ENCODE measurements at regions of chr2 and their contacts with region 1.

Region 1: DNA sequence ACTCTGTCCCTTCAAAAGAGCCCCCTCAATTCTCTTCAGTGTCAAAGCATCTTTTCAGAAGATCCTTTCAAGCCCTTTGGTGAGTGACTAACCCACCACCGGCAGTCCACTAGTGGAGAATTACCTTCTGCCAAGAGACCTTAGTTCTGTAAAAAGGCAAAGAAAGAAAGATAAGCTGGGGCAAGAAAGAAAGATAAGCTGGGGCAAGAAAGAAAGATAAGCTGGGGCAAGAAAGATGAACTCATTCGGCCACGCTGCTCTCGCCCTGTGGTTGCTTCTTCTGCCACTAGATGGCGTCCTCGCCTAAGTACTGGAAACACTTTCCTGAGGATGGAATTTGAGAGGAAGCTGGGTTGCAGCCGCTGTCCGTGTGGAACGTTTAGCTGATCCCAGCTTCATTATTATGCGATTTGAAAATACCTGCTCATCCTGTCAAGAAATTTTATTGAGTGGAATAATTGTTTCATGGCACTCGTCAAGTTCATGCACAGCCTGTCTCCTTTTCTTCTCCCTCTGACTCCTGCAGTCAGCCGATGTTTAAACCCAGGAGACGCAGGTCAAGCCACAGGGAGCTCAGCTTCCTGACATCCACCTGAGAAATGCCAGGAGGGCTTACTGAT is 17.3 kb upstream of the ANXA4 start:
- DNase-seq: peak; percentile 71
- CTCF ChIP-seq: peak; percentile 94

Region 2: DNA sequence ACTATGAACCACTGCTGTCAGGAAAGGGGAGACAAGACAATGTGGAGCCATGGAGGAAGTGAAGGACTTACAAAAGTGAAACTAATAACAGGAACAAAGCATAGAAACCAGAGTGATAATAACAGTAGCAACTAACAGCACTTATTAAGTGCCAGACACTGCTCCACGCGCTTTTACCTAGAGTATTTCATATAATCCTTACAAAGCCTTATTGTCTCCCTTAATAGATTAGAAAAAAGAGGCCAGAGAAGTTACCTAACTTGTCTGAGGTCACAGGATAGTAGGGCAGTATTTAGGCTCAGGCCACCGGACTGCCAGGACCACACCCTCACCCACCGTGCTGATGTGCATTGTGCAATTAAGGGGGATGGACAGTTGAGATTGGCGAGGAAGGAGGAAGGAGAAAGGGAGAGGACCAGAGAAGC is 188.8 kb before region 1 on chr2:
- CTCF ChIA-PET with region 1: no interaction called
- POLR2A ChIA-PET with region 1: no interaction called
- DNase-seq: peak; percentile 23
- CTCF ChIP-seq: no peak

Region 3: DNA sequence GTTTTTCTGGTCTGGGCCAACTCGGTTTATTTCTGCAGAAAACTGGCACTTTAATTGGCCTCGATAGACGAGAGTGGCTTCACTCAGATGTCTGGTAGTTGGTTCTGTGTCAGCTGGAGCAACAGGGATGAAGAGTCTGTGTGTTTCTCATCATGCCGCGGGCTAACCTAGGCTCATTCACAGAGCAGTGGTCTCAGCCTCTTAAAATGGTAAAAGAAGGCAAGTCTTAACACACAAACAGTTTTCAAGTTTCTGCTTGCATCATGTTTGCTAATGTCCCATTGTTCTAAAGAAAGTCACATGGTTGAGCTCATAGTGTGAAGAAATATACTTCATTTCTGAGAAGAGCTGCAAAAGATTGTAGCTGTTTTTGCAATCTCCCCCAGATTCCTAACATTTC is 20.2 kb before region 1 on chr2:
- CTCF ChIA-PET with region 1: interaction called, 13 read pairs
- POLR2A ChIA-PET with region 1: no interaction called
- DNase-seq: no peak
- CTCF ChIP-seq: no peak

Region 4: GRCh38 chr2:69762513-69763497 is 38.2 kb after region 1 on chr2:
- CTCF ChIA-PET with region 1: interaction called, 33 read pairs
- POLR2A ChIA-PET with region 1: no interaction called
- DNase-seq: no peak
- CTCF ChIP-seq: no peak

Region 5: GRCh38 chr2:69789175-69789721 is 64.6 kb after region 1 on chr2:
- CTCF ChIA-PET with region 1: interaction called, 26 read pairs
- POLR2A ChIA-PET with region 1: no interaction called
- DNase-seq: no peak
- CTCF ChIP-seq: no peak

Region 6: GRCh38 chr2:69829256-69830046 is 104.8 kb after region 1 on chr2 and contains the start of gene GMCL1:
- CTCF ChIA-PET with region 1: interaction called, 36 read pairs
- POLR2A ChIA-PET with region 1: no interaction called
- DNase-seq: peak; percentile 95
- CTCF ChIP-seq: no peak

Region 7: GRCh38 chr2:69914170-69914960 is 189.7 kb after region 1 on chr2:
- CTCF ChIA-PET with region 1: interaction called, 17 read pairs
- POLR2A ChIA-PET with region 1: interaction called, 9 read pairs
- DNase-seq: peak; percentile 98
- CTCF ChIP-seq: peak; percentile 43

Region 8: DNA sequence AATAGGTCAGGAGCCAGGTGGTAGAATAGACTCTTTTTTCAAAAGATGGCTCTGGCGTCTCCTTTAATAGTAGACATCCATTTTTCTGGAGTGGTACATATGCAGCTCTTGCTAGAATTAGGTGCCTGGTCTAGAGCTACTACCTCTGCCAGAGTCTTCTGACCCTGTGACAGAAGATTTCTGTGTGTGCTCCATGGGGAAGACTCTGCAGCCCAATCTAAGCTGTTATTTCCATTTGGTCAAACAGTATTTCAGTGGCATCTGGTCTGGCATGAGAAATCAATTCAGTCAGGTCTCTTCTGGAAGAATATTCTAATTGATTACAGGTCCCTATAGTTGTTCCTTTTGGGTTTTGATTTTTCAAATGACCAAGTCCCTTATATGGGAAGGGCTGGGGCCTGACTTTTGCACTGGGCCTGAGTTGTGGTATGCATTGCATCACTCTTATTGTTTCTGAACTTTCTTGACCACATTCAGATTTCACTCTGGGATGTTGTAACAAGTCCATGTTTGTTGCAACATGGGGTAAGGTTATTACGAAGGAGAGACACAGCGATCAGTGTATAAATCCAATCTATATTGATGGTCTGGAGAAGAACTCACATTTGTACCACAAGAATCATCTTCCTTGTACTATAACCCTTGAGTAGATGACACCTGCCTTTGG is 202.3 kb after region 1 on chr2:
- CTCF ChIA-PET with region 1: no interaction called
- POLR2A ChIA-PET with region 1: no interaction called
- DNase-seq: no peak
- CTCF ChIP-seq: no peak

Region 9: DNA sequence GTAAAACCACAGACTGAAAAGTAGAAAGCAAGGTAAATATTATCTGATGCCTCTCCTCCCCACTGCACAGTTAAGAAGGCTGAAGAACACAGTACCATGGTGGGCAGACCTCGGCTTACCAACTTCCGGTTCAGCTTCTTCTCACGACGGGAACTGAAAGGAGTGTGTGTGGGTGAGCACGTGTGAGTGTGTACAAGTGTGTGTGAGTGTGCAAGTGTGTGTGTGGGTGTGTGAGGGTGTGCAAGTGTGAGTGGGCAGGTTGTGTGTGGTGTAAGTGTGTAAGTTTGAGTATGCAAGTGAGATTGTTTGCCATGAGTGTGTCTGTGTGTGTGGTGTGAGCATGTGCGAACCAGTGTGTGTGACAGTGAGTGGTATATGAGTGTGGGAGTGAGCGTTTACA is 939.9 kb after region 1 on chr2:
- CTCF ChIA-PET with region 1: no interaction called
- POLR2A ChIA-PET with region 1: no interaction called
- DNase-seq: no peak
- CTCF ChIP-seq: no peak

Measured in GM10248 (cell line).